Sigmoid colon (tissue), 7 donors: ENCODE measurements at regions of chr4 and their contacts with region 1.

Region 1: GRCh38 chr4:3442959-3443749 is 1.4 kb downstream of the HGFAC start:
- DNase-seq: no peak
- H3K4me3 ChIP-seq: no peak overlapping the region
- H3K27ac ChIP-seq: no peak overlapping the region
- H3K4me1 ChIP-seq: peaks cover 0 to 6% (median 0%) of the 10 kb centered on the region in 4 donors
- H3K27me3 ChIP-seq: peaks cover 0 to 3% (median 0%) of the 10 kb centered on the region in 3 donors
- CTCF ChIP-seq: peak; percentile 89 to 100 (median 98)
- EP300 ChIP-seq: no peak
- POLR2A ChIP-seq: no peak

Region 2: GRCh38 chr4:3201718-3202702 is 241.1 kb before region 1 on chr4:
- intact Hi-C with region 1: loop called (anchors 10 kb)
- DNase-seq: no peak
- H3K4me3 ChIP-seq: no peak overlapping the region
- H3K27ac ChIP-seq: peak overlapping the region; percentile 1 to 80 (median 73)
- H3K4me1 ChIP-seq: peaks cover 0 to 32% (median 23%) of the 10 kb centered on the region in 4 donors
- H3K27me3 ChIP-seq: no peaks in the 10 kb centered on the region
- CTCF ChIP-seq: no peak
- EP300 ChIP-seq: no peak
- POLR2A ChIP-seq: no peak

Region 3: DNA sequence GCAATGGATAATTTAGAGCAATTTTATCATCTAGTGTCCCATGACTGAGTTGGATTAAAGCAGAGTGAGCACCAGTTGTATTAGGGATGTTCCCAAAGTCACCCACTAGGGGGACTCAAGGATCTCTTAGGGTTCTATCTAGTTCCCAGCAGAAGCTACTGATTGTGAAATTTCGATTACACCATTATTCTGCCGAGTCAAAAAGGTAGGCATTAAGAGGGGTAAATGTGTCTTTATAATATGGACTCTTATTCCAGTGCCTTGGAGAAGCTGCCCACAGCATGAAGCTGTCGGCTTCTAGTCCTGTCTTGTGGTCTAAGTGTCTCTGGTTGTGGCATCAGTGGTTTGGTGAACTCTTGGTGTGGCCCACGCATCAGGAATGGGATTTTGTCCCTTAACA is 97.0 kb before region 1 on chr4:
- intact Hi-C with region 1: loop called (anchors 1 kb)
- DNase-seq: no peak
- H3K4me3 ChIP-seq: no peak overlapping the region
- H3K27ac ChIP-seq: no peak overlapping the region
- H3K4me1 ChIP-seq: peaks cover 0 to 17% (median 8%) of the 10 kb centered on the region in 4 donors
- H3K27me3 ChIP-seq: no peaks in the 10 kb centered on the region
- CTCF ChIP-seq: peak; percentile 62 to 95 (median 86)
- EP300 ChIP-seq: no peak
- POLR2A ChIP-seq: no peak

Region 4: DNA sequence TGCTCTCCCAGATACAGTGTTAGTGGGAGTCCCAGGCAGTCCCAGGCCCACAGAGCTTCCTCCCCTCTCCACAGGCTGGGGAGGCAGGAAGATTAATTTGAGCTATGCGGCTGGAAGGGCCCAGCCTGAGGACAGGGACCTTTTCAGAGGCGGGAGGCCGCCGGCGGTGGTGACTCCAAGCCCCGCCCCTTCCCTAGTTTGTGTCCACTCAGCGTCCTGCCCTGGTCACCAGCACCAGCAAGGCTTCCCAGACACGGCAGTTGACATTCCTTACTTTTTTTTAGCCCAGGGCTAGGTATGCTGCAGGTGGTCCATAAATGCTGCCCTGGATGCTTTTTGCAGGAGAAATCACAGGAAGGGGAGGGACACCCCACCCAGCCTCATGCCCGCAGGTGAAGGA is 156.8 kb after region 1 on chr4:
- intact Hi-C with region 1: no loop called
- DNase-seq: no peak
- H3K4me3 ChIP-seq: no peak overlapping the region
- H3K27ac ChIP-seq: no peak overlapping the region
- H3K4me1 ChIP-seq: no peaks in the 10 kb centered on the region
- H3K27me3 ChIP-seq: peaks cover 0 to 4% (median 3%) of the 10 kb centered on the region in 3 donors
- CTCF ChIP-seq: no peak
- EP300 ChIP-seq: no peak
- POLR2A ChIP-seq: no peak